ENCODE measurements at regions of chr6 and their contacts with region 1.

Region 1: GRCh38 chr6:27753668-27754407 is 158.4 kb downstream of the OR2B2 start:
- DNase-seq: peak; percentile 81
- H3K4me3 ChIP-seq: peak overlapping the region; percentile 49 to 86 (median 80)
- H3K27ac ChIP-seq: peak overlapping the region; percentile 27
- H3K4me1 ChIP-seq: no peaks in the 10 kb centered on the region
- H3K27me3 ChIP-seq: no peaks in the 10 kb centered on the region
- CTCF ChIP-seq: peak in 1 of 2 donors; percentile 39

Region 2: GRCh38 chr6:27188885-27189418 is 564.9 kb before region 1 on chr6:
- CTCF ChIA-PET with region 1: no interaction called
- dilution Hi-C with region 1: no loop called
- in situ Hi-C with region 1: no loop called
- intact Hi-C with region 1: loop called (anchors 1 kb)
- DNase-seq: peak; percentile 71
- H3K4me3 ChIP-seq: peak overlapping the region; percentile 56 to 74 (median 71)
- H3K27ac ChIP-seq: peak overlapping the region; percentile 44
- H3K4me1 ChIP-seq: no peaks in the 10 kb centered on the region
- H3K27me3 ChIP-seq: no peaks in the 10 kb centered on the region
- CTCF ChIP-seq: peak; percentile 38 to 68

Region 3: DNA sequence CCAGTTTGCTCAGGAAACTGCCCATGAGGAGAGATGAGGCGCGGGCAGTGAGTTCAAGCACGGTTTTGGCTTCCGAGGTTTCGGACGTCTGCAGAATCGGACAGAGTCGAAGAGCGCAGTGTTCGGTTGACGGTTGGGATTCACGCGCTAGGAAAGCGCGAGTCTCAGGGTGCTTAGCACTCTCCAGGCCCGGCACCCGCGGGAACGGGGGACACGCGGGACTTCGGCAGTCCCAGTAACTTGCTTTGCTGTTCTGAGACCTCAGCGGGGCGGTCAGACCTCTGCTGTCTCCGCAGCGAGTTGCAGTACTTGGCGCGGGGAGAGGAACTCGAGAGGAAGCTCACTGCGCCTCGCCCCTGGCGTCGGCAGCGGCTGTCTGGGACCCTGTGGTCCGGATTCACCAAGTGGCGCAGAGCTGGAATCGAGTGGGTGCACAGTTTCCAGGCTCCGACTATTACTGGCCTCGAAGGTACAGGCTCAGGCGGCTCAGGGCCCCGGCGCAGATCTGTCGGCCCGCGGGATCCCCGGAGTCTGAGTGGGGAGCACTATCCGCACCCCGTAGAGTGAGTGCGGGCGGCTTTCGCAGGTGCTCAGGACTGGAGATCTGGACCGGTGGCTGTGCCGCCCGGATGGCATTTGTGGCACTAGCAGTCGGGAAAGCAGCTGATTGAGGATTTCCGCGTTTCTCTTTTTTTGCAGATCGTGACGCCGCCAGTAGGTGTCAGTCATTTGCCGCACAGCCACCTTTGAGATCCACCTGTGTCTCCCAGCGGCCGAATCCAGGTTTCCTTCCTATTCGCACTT is 441.5 kb before region 1 on chr6 and contains the start of gene POM121L2:
- CTCF ChIA-PET with region 1: no interaction called
- dilution Hi-C with region 1: no loop called
- in situ Hi-C with region 1: no loop called
- intact Hi-C with region 1: loop called (anchors 1 kb)
- DNase-seq: peak; percentile 73
- H3K4me3 ChIP-seq: peak within 1 kb of the TSS; percentile 60 to 90 (median 65)
- H3K27ac ChIP-seq: no peak within 1 kb of the TSS
- H3K4me1 ChIP-seq: peaks cover 13% of the 10 kb centered on the region
- H3K27me3 ChIP-seq: no peaks in the 10 kb centered on the region
- CTCF ChIP-seq: peak; percentile 64 to 87
- total RNA-seq, gene POM121L2: not detected

Region 4: GRCh38 chr6:27495386-27496135 is 258.3 kb before region 1 on chr6:
- CTCF ChIA-PET with region 1: no interaction called
- dilution Hi-C with region 1: no loop called
- in situ Hi-C with region 1: no loop called
- intact Hi-C with region 1: no loop called
- DNase-seq: peak; percentile 93
- H3K4me3 ChIP-seq: peak overlapping the region; percentile 62 to 70 (median 65)
- H3K27ac ChIP-seq: peak overlapping the region; percentile 50
- H3K4me1 ChIP-seq: peaks cover 4% of the 10 kb centered on the region
- H3K27me3 ChIP-seq: no peaks in the 10 kb centered on the region
- CTCF ChIP-seq: peak in 1 of 2 donors; percentile 10

Region 5: GRCh38 chr6:27518881-27519795 is 234.7 kb before region 1 on chr6:
- CTCF ChIA-PET with region 1: interaction called, 3 read pairs
- dilution Hi-C with region 1: no loop called
- in situ Hi-C with region 1: loop called in 1 of 2 experiments (anchors 5 kb)
- intact Hi-C with region 1: loop called (anchors 1 kb)
- DNase-seq: peak; percentile 86
- H3K4me3 ChIP-seq: peak overlapping the region; percentile 45 to 67 (median 55)
- H3K27ac ChIP-seq: peak overlapping the region; percentile 52
- H3K4me1 ChIP-seq: peaks cover 15% of the 10 kb centered on the region
- H3K27me3 ChIP-seq: peaks cover 3% of the 10 kb centered on the region
- CTCF ChIP-seq: peak; percentile 76 to 77

Region 6: DNA sequence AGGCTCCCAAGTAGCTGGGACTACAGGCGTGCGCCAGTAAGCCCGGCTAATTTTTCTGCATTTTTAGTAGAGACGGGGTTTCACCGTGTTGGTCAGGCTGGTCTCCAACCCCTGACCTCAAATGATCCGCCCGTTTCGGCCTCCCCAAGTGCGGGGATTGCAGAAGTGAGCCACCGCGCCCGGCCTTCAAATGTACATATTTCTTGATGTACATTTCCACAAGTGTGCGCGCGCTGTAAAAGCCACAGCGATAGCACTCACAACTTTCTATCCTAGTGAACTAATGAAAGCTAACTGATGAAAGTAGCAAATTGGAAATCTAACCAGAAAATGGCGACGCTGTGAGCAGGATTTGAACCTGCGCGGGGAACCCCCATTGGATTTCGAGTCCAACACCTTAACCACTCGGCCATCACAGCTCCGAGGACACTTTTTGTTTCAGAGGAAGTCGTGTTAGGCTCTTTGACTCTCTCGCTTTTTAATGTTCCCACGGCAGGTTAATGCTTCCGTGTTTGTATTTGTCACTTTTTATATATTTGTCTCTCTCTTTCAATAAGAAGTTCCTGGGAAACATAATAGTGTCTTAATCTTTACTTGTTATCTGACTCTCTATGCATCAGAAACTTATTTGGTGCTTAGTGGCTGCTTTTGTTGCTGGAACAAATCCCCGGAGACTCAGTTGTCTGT is 81.6 kb before region 1 on chr6:
- CTCF ChIA-PET with region 1: no interaction called
- dilution Hi-C with region 1: no loop called
- in situ Hi-C with region 1: no loop called
- intact Hi-C with region 1: loop called (anchors 1 kb)
- DNase-seq: peak; percentile 74
- H3K4me3 ChIP-seq: peak overlapping the region; percentile 32 to 46 (median 41)
- H3K27ac ChIP-seq: no peak overlapping the region
- H3K4me1 ChIP-seq: peaks cover 20% of the 10 kb centered on the region
- H3K27me3 ChIP-seq: no peaks in the 10 kb centered on the region
- CTCF ChIP-seq: no peak

Region 7: DNA sequence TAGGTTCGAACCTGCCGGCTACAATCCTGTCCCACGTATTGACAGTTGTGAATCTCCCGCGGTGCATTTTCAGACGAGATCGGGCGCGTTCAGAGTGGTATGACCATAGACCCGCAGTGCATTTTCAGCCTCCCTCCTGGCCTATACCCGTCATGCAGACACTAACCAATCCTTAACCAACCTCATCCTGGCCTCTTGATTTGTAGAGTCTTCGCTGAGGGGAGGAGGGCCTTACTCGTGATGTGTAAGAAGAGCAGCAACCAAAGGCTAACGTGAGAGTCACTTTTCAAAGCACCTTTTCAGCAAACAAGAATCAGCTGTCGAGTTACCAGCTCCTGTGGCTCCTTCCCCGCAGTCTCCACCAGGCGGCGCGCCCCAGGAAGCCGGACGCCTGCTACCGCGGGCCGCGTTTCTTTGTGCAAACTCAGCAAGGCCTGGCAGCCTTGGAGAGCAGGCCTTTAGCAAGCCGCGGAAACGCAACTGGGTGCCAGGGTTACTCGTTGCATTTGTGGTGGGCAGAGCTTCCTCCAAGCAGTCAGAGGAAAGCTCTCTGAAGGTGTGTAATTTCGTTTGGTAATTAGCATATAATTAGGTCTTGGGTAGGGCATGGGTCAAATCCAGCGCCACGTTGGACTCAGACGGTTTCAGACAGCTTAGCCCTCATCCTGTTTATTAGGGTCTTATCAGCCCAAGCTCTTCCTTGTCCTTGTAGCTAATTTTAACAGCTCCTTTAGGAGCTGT is 18.6 kb after region 1 on chr6:
- CTCF ChIA-PET with region 1: interaction called, 6 read pairs
- dilution Hi-C with region 1: no loop called
- in situ Hi-C with region 1: no loop called
- intact Hi-C with region 1: loop called (anchors 1 kb)
- DNase-seq: peak; percentile 90
- H3K4me3 ChIP-seq: peak overlapping the region in 2 of 3 experiments; percentile 12 to 19
- H3K27ac ChIP-seq: no peak overlapping the region
- H3K4me1 ChIP-seq: peaks cover 6% of the 10 kb centered on the region
- H3K27me3 ChIP-seq: no peaks in the 10 kb centered on the region
- CTCF ChIP-seq: peak; percentile 91 to 95

Measured in mammary epithelial cell (primary cell).